ENCODE measurements at regions of chr3 and their contacts with region 1.

Region 1: DNA sequence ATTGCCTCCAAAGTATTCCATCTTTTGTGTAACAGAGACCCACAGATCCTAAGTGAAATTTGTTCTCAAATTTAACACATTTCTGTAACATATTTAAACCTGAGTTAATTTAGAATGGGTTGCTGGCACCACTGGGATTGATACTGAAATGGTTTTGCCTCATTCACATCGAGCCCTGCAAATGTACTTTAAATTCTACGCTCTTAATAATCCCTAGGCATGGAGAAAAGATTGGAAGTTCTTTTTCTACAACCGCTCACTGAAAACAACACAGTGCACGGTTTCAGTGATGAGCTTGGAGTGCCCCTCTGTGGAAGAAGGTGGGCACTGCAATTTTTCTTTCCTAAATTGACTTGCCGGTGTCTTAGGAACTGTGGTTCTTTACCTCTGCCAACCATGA is 109.9 kb upstream of the ATP11B start:
- DNase-seq: peak; percentile 26 to 77
- ATAC-seq: peak; percentile 67 to 73 (median 71)
- H3K4me3 ChIP-seq: no peak overlapping the region
- H3K4me3 Mint-ChIP-seq: peak overlapping the region; percentile 84
- H3K27ac ChIP-seq: no peak overlapping the region
- H3K27ac Mint-ChIP-seq: peak overlapping the region in 1 of 2 donors; percentile 43
- H3K4me1 ChIP-seq: peaks cover 9% of the 10 kb centered on the region
- H3K4me1 Mint-ChIP-seq: peaks cover 10% of the 10 kb centered on the region in 2 donors
- H3K27me3 ChIP-seq: peaks cover 27% of the 10 kb centered on the region
- H3K27me3 Mint-ChIP-seq: peaks cover 41 to 63% of the 10 kb centered on the region in 2 donors
- CTCF ChIP-seq: peak; percentile 83

Region 2: GRCh38 chr3:180802837-180803236 is 1880.6 kb before region 1 on chr3:
- intact Hi-C with region 1: loop called (anchors 5 kb)
- DNase-seq: no peak
- ATAC-seq: no peak
- H3K4me3 ChIP-seq: no peak overlapping the region
- H3K4me3 Mint-ChIP-seq: no peak overlapping the region
- H3K27ac ChIP-seq: no peak overlapping the region
- H3K27ac Mint-ChIP-seq: no peak overlapping the region
- H3K4me1 ChIP-seq: no peaks in the 10 kb centered on the region
- H3K4me1 Mint-ChIP-seq: no peaks in the 10 kb centered on the region
- H3K27me3 ChIP-seq: no peaks in the 10 kb centered on the region
- H3K27me3 Mint-ChIP-seq: no peaks in the 10 kb centered on the region
- CTCF ChIP-seq: no peak

Region 3: GRCh38 chr3:181326637-181327223 is 1356.7 kb before region 1 on chr3:
- intact Hi-C with region 1: loop called (anchors 5 kb)
- DNase-seq: peak in 1 of 2 donors; percentile 16
- ATAC-seq: no peak
- H3K4me3 ChIP-seq: no peak overlapping the region
- H3K4me3 Mint-ChIP-seq: no peak overlapping the region
- H3K27ac ChIP-seq: no peak overlapping the region
- H3K27ac Mint-ChIP-seq: no peak overlapping the region
- H3K4me1 ChIP-seq: no peaks in the 10 kb centered on the region
- H3K4me1 Mint-ChIP-seq: no peaks in the 10 kb centered on the region
- H3K27me3 ChIP-seq: no peaks in the 10 kb centered on the region
- H3K27me3 Mint-ChIP-seq: no peaks in the 10 kb centered on the region
- CTCF ChIP-seq: no peak

Region 4: DNA sequence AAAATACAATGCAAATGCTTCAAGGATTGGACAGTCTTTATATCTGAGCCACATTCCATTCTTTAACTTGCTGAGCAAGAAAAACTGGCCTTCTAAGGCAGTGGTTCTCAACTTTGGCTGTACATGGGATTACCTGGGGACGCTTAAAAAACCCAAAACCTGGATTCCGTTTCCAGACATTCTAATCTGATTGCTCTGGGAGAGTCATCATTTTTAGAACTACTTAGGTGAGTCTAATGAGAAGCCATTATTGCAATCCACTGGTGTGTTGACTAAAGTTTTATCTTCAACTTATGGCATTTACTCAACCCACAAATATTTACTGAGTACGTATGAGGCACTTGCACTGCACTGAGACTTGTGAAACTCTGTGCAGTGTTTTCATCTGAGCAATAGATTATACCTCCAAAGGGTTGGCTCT is 85.8 kb before region 1 on chr3:
- intact Hi-C with region 1: no loop called
- DNase-seq: no peak
- ATAC-seq: no peak
- H3K4me3 ChIP-seq: no peak overlapping the region
- H3K4me3 Mint-ChIP-seq: no peak overlapping the region
- H3K27ac ChIP-seq: no peak overlapping the region
- H3K27ac Mint-ChIP-seq: no peak overlapping the region
- H3K4me1 ChIP-seq: no peaks in the 10 kb centered on the region
- H3K4me1 Mint-ChIP-seq: no peaks in the 10 kb centered on the region
- H3K27me3 ChIP-seq: no peaks in the 10 kb centered on the region
- H3K27me3 Mint-ChIP-seq: no peaks in the 10 kb centered on the region
- CTCF ChIP-seq: no peak

Region 5: DNA sequence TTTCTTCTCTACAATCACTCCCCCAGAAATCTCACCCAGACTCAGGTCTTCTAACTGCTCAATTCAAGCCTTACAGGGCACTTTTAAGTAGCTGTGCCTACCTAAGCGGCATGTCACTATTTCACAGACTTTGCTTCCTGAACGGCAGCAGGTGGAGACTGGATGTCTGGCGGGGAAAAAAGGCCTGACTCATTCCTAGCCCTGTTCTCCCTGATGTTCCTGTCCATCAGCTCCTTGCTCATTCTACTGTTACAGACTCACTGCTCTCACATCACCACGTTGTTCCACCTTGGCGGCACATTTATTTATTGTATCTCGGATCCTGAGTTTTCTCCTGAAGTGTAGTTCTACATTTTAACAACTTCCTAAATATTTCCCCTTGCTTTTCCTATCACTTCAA is 57.3 kb after region 1 on chr3:
- intact Hi-C with region 1: no loop called
- DNase-seq: no peak
- ATAC-seq: no peak
- H3K4me3 ChIP-seq: no peak overlapping the region
- H3K4me3 Mint-ChIP-seq: no peak overlapping the region
- H3K27ac ChIP-seq: no peak overlapping the region
- H3K27ac Mint-ChIP-seq: no peak overlapping the region
- H3K4me1 ChIP-seq: no peaks in the 10 kb centered on the region
- H3K4me1 Mint-ChIP-seq: no peaks in the 10 kb centered on the region
- H3K27me3 ChIP-seq: no peaks in the 10 kb centered on the region
- H3K27me3 Mint-ChIP-seq: peaks cover 4 to 8% of the 10 kb centered on the region in 2 donors
- CTCF ChIP-seq: no peak

Measured in natural killer cell (primary cell).